ENCODE measurements at regions of chr16 and their contacts with region 1.

Region 1: DNA sequence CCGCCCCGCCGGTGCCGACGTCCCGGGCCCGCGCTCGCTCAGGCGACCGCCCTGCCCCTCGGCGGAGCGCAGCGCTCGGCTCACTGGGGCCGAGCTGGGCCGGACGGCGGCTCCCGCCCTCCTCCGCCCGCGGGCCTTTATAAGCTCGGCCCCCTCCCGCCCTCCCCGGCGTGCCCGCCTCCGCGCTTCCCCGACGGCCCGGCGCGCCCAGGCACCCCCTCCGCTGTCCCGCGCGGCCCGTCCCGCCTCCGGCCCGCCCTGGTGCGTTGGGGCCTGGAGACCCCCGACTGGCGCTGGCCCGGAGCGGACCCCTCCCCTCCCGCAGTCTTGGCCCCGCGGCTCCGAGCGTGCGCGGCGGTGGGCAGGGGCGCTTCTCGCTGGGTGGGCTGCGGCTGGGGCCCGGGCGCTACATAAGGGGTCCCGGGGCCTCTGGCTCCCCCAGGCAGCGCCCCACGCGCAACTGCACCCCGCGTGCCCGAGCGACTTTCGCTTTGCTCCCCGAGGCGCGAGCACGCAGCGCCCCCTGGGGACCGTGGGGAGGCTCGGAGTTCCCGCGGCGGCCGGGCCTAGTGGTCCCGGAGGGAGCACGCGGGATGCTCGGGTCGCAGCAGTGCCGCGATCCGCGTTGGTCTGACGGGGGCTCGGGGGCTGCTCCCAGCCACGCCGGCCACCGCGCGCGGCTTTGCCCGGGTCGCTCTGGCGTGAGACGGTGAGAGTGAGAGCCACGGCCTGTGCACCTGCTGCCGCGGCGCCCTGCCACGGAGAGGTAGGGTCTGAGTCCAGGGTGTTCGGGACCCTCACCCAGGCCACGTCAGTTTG is at the start of gene PIEZO1:
- DNase-seq: peak; percentile 47
- H3K4me3 ChIP-seq: peak within 1 kb of the TSS; percentile 57 to 76 (median 65)
- H3K27ac ChIP-seq: peak within 1 kb of the TSS; percentile 76
- H3K4me1 ChIP-seq: peaks cover 33% of the 10 kb centered on the region
- H3K27me3 ChIP-seq: no peaks in the 10 kb centered on the region
- CTCF ChIP-seq: peak; percentile 50 to 90
- total RNA-seq, gene PIEZO1: 165 to 215 TPM

Region 2: GRCh38 chr16:88678224-88678979 is 106.9 kb before region 1 on chr16:
- CTCF ChIA-PET with region 1: no interaction called
- dilution Hi-C with region 1: loop called (anchors 5 kb)
- in situ Hi-C with region 1: no loop called
- intact Hi-C with region 1: no loop called
- DNase-seq: no peak
- H3K4me3 ChIP-seq: no peak overlapping the region
- H3K27ac ChIP-seq: no peak overlapping the region
- H3K4me1 ChIP-seq: peaks cover 8% of the 10 kb centered on the region
- H3K27me3 ChIP-seq: no peaks in the 10 kb centered on the region
- CTCF ChIP-seq: no peak

Region 3: GRCh38 chr16:88706288-88706964 is 78.9 kb before region 1 on chr16 and contains the starts of genes CTU2 and RNF166:
- CTCF ChIA-PET with region 1: no interaction called
- dilution Hi-C with region 1: no loop called
- in situ Hi-C with region 1: no loop called
- intact Hi-C with region 1: no loop called
- DNase-seq: peak; percentile 82
- H3K4me3 ChIP-seq: peak within 1 kb of the TSS; percentile 82 to 96 (median 82)
- H3K27ac ChIP-seq: peak within 1 kb of the TSS; percentile 26
- H3K4me1 ChIP-seq: peaks cover 8% of the 10 kb centered on the region
- H3K27me3 ChIP-seq: no peaks in the 10 kb centered on the region
- CTCF ChIP-seq: no peak
- total RNA-seq, gene CTU2: 13.2 to 26.5 TPM
- total RNA-seq, gene RNF166: 9.8 to 11.2 TPM

Region 4: DNA sequence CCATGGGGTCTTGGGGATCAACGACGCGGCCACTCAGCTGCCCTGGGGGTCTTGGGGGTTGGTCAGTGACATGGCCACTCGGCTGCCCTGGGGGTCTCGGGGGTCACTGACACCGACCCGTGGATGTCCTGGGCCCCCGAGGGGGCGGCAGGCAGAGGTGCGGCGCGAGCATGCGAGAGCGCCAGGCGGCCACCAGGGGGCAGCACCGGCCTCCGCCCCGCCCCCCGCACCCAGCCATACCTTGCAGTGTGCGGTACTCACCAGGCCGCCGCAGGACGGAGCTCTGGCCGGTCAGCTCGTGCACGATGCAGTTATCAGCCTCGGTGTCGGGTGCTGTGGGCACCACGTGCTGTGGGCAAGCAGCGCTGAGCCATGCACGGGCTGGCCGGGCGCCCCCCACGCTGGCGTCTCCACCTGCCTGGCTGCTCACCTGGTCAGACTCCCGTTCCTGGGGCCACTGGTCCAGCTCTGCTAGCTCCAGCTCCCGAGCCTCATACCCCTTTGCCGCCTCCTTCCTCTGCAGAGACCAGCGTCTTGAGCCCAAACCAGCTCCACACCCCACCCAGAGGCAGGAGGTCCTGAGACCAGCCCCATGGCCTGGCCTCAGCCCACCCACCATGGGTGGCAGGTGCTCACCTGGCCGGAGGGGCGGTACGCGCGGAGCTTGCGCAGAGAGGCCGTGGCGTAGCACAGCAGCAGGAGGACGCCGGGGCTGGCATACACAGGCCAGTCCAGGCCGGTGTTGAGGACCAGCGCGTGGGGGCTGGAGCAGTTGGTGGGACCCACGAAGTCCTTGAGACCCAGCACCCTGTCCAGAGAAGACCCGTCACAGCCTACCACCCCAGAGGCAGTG is 47.8 kb before region 1 on chr16:
- CTCF ChIA-PET with region 1: interaction called, 37 read pairs
- dilution Hi-C with region 1: no loop called
- in situ Hi-C with region 1: no loop called
- intact Hi-C with region 1: loop called (anchors 1 kb)
- DNase-seq: peak; percentile 29
- H3K4me3 ChIP-seq: no peak overlapping the region
- H3K27ac ChIP-seq: no peak overlapping the region
- H3K4me1 ChIP-seq: peaks cover 3% of the 10 kb centered on the region
- H3K27me3 ChIP-seq: no peaks in the 10 kb centered on the region
- CTCF ChIP-seq: peak; percentile 64 to 83

Region 5: GRCh38 chr16:88754912-88755744 is 30.2 kb before region 1 on chr16:
- CTCF ChIA-PET with region 1: no interaction called
- dilution Hi-C with region 1: loop called (anchors 5 kb)
- in situ Hi-C with region 1: no loop called
- intact Hi-C with region 1: no loop called
- DNase-seq: peak; percentile 85
- H3K4me3 ChIP-seq: no peak overlapping the region
- H3K27ac ChIP-seq: peak overlapping the region; percentile 5
- H3K4me1 ChIP-seq: peaks cover 27% of the 10 kb centered on the region
- H3K27me3 ChIP-seq: no peaks in the 10 kb centered on the region
- CTCF ChIP-seq: peak; percentile 39 to 61

Region 6: GRCh38 chr16:89096768-89097391 is 311.6 kb after region 1 on chr16:
- CTCF ChIA-PET with region 1: no interaction called
- dilution Hi-C with region 1: loop called (anchors 5 kb)
- in situ Hi-C with region 1: no loop called
- intact Hi-C with region 1: no loop called
- DNase-seq: no peak
- H3K4me3 ChIP-seq: no peak overlapping the region
- H3K27ac ChIP-seq: no peak overlapping the region
- H3K4me1 ChIP-seq: peaks cover 10% of the 10 kb centered on the region
- H3K27me3 ChIP-seq: no peaks in the 10 kb centered on the region
- CTCF ChIP-seq: no peak

Region 7: GRCh38 chr16:89155184-89155679 is 369.9 kb after region 1 on chr16:
- CTCF ChIA-PET with region 1: no interaction called
- dilution Hi-C with region 1: loop called (anchors 5 kb)
- in situ Hi-C with region 1: no loop called
- intact Hi-C with region 1: no loop called
- DNase-seq: no peak
- H3K4me3 ChIP-seq: no peak overlapping the region
- H3K27ac ChIP-seq: no peak overlapping the region
- H3K4me1 ChIP-seq: peaks cover 5% of the 10 kb centered on the region
- H3K27me3 ChIP-seq: no peaks in the 10 kb centered on the region
- CTCF ChIP-seq: no peak

Region 8: GRCh38 chr16:89308390-89309333 is 523.3 kb after region 1 on chr16:
- CTCF ChIA-PET with region 1: no interaction called
- dilution Hi-C with region 1: loop called (anchors 10 kb)
- in situ Hi-C with region 1: no loop called
- intact Hi-C with region 1: no loop called
- DNase-seq: no peak
- H3K4me3 ChIP-seq: no peak overlapping the region
- H3K27ac ChIP-seq: no peak overlapping the region
- H3K4me1 ChIP-seq: peaks cover 4% of the 10 kb centered on the region
- H3K27me3 ChIP-seq: no peaks in the 10 kb centered on the region
- CTCF ChIP-seq: peak; percentile 46 to 49

Measured in mammary epithelial cell (primary cell).